HEK293 (cell line): ENCODE measurements at regions of chr19 and their contacts with region 1.

Region 1: GRCh38 chr19:42184401-42184861 is 33.0 kb downstream of the DEDD2 start:
- H3K4me3 ChIP-seq: no peak overlapping the region
- H3K27ac ChIP-seq: no peak overlapping the region
- H3K4me1 ChIP-seq: no peaks in the 10 kb centered on the region
- CTCF ChIP-seq: peak; percentile 92

Region 2: DNA sequence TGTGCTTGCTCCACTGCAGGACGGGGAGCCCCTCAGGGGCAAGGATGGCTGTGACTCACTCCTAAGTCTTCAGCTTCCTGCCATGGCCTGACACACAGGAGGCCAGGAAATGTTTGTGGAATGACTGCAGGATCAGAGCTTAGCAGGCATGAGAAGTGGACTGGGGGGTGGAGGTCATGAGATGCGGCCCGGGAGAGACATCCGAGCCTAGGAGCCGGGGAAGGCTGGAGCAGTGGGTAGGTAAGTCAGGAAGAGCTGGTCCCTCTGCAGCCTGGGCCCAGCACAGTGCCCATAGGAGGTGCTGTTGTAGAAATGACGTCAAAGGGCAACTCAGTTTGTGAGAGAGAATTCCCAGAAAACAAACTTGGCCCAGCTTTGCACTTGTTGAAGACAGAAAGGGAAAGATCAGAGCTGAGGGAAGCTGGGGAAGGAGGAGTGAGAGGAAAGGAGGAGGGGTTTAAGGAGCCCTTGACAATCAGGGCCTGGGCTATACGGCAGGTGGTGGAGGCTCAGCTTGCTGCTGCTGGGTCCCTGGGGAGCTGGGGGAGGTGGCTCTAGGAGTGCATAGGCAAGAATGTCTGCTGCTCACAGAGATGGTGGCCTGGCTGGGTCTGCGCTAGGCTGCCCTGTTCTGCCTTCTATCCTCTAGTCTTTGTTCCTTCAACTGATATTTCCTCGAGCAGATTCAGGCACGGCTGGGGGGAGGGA is 70.6 kb before region 1 on chr19:
- CTCF ChIA-PET with region 1: interaction called, 101 read pairs
- POLR2A ChIA-PET with region 1: no interaction called
- H3K4me3 ChIP-seq: no peak overlapping the region
- H3K27ac ChIP-seq: 0 out of 2 replicates have a peak overlapping the region, but pooled peaks have one; percentile 5
- H3K4me1 ChIP-seq: peaks cover 9% of the 10 kb centered on the region; the same call in 1 of the 2 replicates
- CTCF ChIP-seq: peak; percentile 40; the same call in 1 of the 2 replicates

Region 3: DNA sequence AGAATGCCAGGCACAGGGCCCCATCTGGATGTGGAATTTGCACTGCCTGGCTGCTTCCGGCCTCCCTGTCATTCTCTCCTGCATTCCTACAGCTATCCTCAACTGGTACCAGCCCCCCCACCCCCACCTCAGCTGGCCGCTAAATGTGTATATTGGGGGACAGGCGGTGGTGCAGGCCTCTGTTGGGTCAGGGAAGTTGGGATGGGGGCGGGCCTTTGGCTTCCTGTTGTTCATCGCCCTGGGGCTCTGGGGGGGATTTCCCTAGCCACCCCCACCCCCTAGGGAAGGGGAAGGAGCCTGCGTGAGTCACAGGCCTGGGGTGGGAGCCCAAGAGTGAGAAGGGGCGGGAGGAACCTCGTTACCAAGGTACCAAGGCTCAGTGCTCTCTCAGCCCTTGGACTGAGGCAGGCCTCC is 62.8 kb before region 1 on chr19:
- CTCF ChIA-PET with region 1: interaction called, 10 read pairs
- POLR2A ChIA-PET with region 1: no interaction called
- H3K4me3 ChIP-seq: no peak overlapping the region
- H3K27ac ChIP-seq: no peak overlapping the region
- H3K4me1 ChIP-seq: no peaks in the 10 kb centered on the region
- CTCF ChIP-seq: no peak

Region 4: GRCh38 chr19:42166316-42166715 is 18.1 kb before region 1 on chr19:
- CTCF ChIA-PET with region 1: interaction called, 25 read pairs
- POLR2A ChIA-PET with region 1: no interaction called
- H3K4me3 ChIP-seq: no peak overlapping the region
- H3K27ac ChIP-seq: no peak overlapping the region
- H3K4me1 ChIP-seq: no peaks in the 10 kb centered on the region
- CTCF ChIP-seq: no peak

Region 5: DNA sequence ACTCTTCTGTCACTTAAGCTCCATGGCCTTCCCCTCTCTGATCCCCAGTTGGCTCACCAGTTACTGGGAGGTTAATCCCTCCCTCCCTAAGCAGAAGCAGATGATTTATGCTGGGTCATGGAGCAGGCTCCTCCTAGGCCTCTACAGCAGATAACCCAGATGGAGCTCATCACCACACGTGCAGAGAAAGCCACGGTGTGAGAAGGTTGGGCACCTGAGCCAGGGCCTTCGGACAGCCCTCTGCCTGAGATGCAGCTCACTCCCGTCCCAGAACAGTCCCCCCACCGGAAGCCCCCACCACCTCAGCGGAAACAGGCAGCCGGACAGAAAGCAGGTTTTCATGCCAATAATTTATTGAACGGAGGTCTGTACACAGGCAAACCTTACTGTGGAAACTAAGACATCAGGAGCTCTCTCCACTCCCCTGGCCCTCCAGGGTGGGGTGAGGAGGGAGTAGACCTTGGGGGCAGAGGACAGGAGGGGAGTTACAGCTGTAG is 45.5 kb after region 1 on chr19:
- CTCF ChIA-PET with region 1: interaction called, 11 read pairs
- POLR2A ChIA-PET with region 1: no interaction called
- H3K4me3 ChIP-seq: no peak overlapping the region
- H3K27ac ChIP-seq: peak overlapping the region; percentile 34; the same call in 1 of the 2 replicates
- H3K4me1 ChIP-seq: no peaks in the 10 kb centered on the region
- CTCF ChIP-seq: no peak